ENCODE measurements at regions of chr3 and their contacts with region 1.

Region 1: DNA sequence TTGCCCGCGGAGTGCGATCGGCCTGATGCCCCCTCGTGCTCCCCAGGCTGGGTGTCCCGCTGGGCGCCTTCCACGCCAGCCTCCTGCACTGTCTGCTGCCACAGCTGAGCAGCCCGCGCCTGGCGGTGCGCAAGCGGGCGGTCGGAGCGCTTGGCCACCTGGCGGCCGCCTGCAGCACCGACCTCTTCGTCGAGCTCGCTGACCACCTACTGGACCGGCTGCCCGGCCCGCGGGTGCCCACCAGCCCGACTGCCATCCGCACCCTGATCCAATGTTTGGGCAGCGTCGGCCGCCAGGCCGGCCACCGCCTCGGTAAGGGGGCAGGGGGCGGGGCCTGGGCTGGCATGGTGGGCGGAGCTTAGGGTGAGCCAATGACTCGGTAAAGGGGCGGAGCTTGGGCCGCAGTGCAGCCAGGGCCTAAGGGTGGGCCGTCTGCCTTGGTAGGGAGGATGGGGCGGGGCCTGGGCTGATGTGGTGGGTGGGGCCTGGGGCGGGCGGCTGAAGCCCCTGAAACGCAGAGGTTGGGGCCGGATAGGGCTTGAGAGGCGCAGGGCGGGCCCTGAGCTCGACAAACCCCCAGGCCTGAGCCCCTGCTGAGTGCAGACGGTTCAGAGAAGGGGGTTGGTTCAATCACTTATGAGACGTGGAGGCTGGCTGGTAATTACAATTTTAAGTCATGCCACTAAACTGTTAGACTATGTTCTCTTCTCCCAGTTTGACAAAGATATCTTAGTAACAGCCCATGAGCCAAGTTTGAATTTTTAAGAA is 13.7 kb downstream of the CAND2 start:
- DNase-seq: peak; percentile 94
- H3K4me3 Mint-ChIP-seq: peak overlapping the region; percentile 52
- H3K27ac Mint-ChIP-seq: no peak overlapping the region
- H3K4me1 Mint-ChIP-seq: peaks cover 3% of the 10 kb centered on the region
- H3K27me3 Mint-ChIP-seq: no peaks in the 10 kb centered on the region

Region 2: DNA sequence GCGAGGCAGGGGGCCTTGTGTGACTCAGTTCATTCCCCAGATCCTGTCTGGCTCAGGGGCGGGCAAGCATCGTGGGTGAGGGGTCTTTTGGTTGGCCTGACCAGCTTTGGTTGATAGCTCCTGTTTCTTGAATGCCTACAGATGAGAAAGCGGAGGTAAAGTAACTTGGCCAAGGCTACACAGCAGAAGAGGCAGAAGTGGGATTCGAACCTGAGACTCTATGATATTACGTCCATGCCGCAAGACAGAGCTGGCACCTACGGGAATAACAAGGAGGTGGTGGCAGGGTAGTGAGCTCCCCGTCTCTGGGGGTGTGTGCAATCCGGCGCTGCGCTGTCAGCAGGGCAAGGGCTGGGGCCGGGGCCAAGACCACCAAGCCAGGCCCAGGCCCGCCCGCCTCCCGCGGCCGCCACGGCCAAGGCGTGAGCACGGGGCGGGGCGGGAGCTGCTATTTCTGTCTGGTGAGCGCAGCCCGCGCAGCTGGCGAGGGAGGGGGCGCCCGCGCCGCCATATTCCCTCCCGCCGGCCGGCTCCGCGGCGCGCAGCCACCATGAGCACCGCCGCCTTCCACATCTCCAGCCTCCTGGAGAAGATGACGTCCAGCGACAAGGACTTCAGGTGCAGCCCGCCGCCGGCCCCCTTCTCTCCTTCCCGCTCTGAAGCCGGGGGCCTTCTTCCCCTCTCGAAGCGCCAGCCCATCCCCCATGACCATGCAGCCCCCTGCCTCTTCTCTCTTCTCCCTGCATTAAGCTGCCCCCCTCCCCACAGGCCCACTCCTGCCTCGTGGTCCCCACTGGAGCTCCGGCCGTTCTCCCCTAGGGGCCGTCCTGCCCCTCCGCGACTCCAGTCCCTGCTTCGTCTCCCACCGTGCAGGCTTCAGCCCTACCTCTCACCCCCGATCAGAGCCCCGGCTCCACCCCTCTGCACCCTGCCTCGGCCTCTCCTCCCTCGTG is 13.8 kb before region 1 on chr3 and contains the start of gene CAND2:
- CTCF ChIA-PET with region 1: interaction called, 22 read pairs
- POLR2A ChIA-PET with region 1: no interaction called
- intact Hi-C with region 1: no loop called
- DNase-seq: peak; percentile 45
- H3K4me3 Mint-ChIP-seq: peak within 1 kb of the TSS; percentile 72
- H3K27ac Mint-ChIP-seq: no peak within 1 kb of the TSS
- H3K4me1 Mint-ChIP-seq: peaks cover 6% of the 10 kb centered on the region
- H3K27me3 Mint-ChIP-seq: peaks cover 2% of the 10 kb centered on the region
- total RNA-seq, gene CAND2: 1.2 to 1.6 TPM

Region 3: DNA sequence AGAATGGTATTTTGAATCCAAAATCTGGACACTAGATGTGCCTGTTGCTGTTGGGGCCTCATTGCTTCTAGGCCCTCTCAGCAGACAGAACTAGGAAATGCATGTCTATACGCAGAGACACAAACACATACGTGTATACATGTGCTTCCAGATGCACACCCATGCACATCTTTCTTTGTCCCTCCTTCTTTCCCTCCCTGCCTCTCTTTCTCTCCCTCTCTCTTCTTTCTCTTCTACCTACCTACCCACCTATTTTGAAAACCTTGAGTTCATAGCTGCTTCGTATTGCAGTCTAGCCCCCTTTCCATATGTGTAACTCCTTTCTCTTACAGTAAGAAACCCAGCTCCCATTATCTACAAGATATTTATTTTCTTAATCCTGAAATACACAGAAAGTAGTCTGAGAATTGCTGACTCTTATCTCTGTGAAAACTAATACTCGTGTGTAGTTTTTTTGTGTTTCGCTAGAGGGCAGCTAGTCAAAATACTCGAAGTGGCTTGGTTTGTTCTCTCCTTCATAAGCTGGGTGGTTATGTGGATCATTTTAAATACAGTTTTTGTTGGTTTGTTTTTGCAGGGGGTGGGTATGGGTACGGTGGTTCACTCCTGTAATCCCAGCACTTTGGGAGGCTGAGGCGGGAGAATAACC is 12.7 kb after region 1 on chr3:
- CTCF ChIA-PET with region 1: interaction called, 10 read pairs
- POLR2A ChIA-PET with region 1: no interaction called
- intact Hi-C with region 1: no loop called
- DNase-seq: no peak
- H3K4me3 Mint-ChIP-seq: no peak overlapping the region
- H3K27ac Mint-ChIP-seq: no peak overlapping the region
- H3K4me1 Mint-ChIP-seq: no peaks in the 10 kb centered on the region
- H3K27me3 Mint-ChIP-seq: no peaks in the 10 kb centered on the region